Right ventricle myocardium inferior (tissue), 1 donor: ENCODE measurements at regions of chr14 and their contacts with region 1.

Region 1: DNA sequence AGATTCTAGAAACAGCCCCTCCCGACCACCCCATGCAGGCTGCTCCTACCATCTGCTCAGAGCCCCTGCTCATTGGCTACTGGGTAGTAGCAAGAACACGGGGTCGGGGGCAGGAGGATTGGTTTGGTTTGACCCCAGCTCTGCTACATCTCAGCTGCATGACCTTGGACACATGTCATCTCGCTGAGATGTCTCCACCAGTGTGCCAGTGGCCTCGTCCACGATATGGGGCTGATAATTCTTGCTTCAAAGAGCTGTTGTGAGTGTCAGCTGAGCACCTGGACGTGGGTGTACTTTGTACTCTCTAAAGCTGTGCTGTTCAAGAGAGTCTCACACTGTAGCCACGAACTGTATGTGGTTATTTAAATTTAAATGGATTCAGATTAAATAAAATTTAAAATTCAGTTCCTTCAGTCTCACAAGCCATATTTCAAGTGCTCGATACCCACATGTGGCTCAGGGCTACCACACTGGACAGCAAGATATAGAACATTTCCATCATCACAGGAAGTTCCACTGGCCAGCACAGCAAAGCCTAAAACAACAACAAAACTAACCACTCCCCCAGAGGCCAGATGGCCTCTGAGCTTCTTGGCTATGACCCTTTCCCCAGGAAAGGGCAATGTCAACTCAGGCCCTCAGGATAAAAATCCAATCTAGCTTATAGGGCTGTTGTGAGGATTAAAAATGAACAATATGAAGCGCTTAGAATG is 18.6 kb downstream of the LTBP2 start:
- DNase-seq: no peak
- ATAC-seq: peak; percentile 56

Region 2: DNA sequence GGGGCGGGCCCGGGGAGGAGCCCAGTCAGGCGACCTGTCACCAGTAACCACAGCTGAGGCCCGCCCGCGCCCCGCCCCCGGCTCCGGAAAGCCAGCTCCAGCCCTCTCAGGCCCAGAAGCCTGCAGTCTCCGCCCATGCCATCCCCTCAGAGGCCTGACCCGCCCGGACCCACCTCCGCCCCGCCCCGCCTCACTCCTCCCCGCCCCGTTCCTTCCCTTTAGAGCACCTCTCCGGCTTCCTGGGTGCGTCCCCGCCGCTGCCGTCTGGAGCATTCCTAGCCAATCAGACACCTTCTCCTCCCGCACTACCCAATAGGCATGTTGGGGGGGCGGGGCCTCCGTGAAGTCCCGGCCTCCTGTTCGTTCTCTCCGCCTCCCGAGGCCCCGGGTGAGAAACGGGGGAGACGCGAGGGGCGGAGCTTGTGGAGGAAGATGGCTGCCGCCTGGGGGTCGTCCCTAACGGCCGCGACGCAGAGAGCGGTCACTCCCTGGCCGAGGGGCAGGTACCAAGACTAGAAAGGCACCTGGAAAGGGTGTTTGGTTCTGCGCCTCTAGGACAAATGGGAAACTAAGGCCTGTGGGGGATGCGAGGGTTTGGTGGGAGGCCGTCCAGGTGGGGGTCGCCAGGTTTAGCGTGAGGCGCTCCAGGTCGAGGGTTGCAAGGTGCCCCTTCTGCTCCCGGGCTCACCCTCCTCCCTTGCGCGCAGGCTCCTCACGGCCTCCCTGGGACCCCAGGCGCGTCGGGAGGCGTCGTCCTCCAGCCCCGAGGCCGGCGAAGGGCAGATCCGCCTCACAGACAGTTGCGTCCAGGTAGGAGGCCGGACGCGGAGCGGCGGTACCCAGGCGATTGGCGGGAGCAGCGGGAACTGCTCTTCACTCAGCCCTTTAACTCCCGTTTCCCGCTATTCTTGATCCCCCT is 99.8 kb before region 1 on chr14 and contains the start of gene ISCA2:
- intact Hi-C with region 1: loop called (anchors 5 kb)
- DNase-seq: peak; percentile 100
- ATAC-seq: peak; percentile 98
- total RNA-seq, gene ISCA2: 38.4 TPM

Region 3: DNA sequence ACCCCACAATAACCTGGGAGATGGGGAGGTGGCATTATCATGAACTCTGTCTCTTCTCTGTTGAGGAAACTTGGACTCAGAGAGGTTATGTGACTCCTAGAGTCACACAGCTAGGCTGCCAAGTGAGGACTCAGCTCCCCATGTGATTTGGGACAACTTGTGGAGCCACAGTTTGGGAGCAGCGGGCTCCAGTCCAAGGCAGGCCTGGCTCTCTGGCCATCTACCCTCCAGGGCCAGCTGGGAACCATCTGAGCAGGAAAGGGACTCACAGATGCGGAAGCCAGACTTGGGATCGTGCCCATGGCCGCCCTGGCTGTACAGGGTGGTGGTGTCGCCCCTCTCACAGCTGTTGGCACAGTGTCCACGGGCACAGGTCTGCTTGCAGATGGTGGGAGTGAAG is 40.8 kb before region 1 on chr14:
- intact Hi-C with region 1: loop called (anchors 5 kb)
- DNase-seq: peak; percentile 86
- ATAC-seq: peak; percentile 51